Caco-2 (cell line): ENCODE measurements at regions of chr7 and their contacts with region 1.

Region 1: GRCh38 chr7:102390697-102391484 is 5.3 kb upstream of the PRKRIP1 start:
- DNase-seq: peak; percentile 87 to 91
- H3K4me3 ChIP-seq: no peak overlapping the region
- H3K4me3 Mint-ChIP-seq: no peak overlapping the region
- H3K27ac Mint-ChIP-seq: peak overlapping the region; percentile 35
- H3K4me1 ChIP-seq: peaks cover 27% of the 10 kb centered on the region
- H3K4me1 Mint-ChIP-seq: peaks cover 15% of the 10 kb centered on the region
- H3K27me3 ChIP-seq: no peaks in the 10 kb centered on the region
- H3K27me3 Mint-ChIP-seq: no peaks in the 10 kb centered on the region
- CTCF ChIP-seq: peak; percentile 87 to 95

Region 2: GRCh38 chr7:102279537-102280400 is 111.1 kb before region 1 on chr7:
- CTCF ChIA-PET with region 1: interaction called, 9 read pairs
- POLR2A ChIA-PET with region 1: interaction called, 4 read pairs
- intact Hi-C with region 1: loop called (anchors 1 kb)
- DNase-seq: peak; percentile 73 to 79
- H3K4me3 ChIP-seq: no peak overlapping the region
- H3K4me3 Mint-ChIP-seq: no peak overlapping the region
- H3K27ac Mint-ChIP-seq: no peak overlapping the region
- H3K4me1 ChIP-seq: no peaks in the 10 kb centered on the region
- H3K4me1 Mint-ChIP-seq: peaks cover 1% of the 10 kb centered on the region
- H3K27me3 ChIP-seq: no peaks in the 10 kb centered on the region
- H3K27me3 Mint-ChIP-seq: no peaks in the 10 kb centered on the region
- CTCF ChIP-seq: peak; percentile 92 to 96

Region 3: DNA sequence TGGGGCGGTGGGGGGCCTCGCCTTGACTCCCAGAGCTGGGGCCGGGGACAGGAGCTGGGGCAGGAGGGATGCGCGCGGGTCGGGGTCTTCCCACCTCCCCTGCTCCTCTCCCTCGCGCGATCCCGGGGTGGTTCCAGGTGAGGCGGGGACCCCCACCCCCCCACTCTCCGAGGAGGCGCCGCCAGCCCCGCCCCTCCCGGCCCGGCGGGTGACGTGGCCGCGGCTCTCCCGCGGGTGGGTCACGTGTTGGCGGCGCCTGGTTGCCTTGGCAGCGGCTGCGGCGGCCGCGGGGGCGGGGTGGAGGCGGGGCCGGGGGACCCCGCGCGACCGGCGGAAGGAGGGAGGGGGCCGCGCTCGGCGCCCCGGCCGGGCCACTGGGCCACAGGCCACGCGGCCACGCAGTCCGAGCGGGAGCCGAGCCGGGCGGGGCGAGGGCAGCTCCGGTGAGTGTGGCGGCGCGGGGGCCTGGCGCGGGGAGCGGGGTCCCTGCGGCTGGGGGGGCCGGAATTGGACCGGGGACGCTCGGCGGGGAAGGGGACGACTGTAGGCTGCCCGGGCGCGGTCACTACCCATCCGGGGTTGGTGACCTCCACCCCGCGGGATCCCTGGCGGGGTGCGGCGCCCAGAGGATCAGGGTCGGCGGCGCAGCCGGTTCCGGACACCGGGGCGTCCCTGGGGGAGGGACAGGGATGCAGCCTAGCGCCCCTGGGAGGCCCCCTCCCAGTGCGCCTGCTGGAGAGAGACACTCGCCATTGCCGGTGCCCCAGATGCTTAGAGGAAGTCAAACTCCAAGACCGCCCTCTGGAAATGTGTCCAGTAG is 42.5 kb after region 1 on chr7 and contains the start of gene ORAI2:
- CTCF ChIA-PET with region 1: no interaction called
- POLR2A ChIA-PET with region 1: interaction called, 12 read pairs
- intact Hi-C with region 1: no loop called
- DNase-seq: peak; percentile 76 to 87
- H3K4me3 ChIP-seq: peak within 1 kb of the TSS; percentile 93
- H3K4me3 Mint-ChIP-seq: peak within 1 kb of the TSS; percentile 78
- H3K27ac Mint-ChIP-seq: peak within 1 kb of the TSS; percentile 78
- H3K4me1 ChIP-seq: peaks cover 22% of the 10 kb centered on the region
- H3K4me1 Mint-ChIP-seq: peaks cover 16% of the 10 kb centered on the region
- H3K27me3 ChIP-seq: no peaks in the 10 kb centered on the region
- H3K27me3 Mint-ChIP-seq: no peaks in the 10 kb centered on the region
- CTCF ChIP-seq: no peak
- total RNA-seq, gene ORAI2: 19.4 and 20.2 TPM in 2 replicates

Region 4: GRCh38 chr7:102456327-102456726 is 65.4 kb after region 1 on chr7:
- CTCF ChIA-PET with region 1: no interaction called
- POLR2A ChIA-PET with region 1: no interaction called
- intact Hi-C with region 1: no loop called
- DNase-seq: no peak
- H3K4me3 ChIP-seq: no peak overlapping the region
- H3K4me3 Mint-ChIP-seq: no peak overlapping the region
- H3K27ac Mint-ChIP-seq: no peak overlapping the region
- H3K4me1 ChIP-seq: peaks cover 3% of the 10 kb centered on the region; the same call in 1 of the 2 replicates
- H3K4me1 Mint-ChIP-seq: no peaks in the 10 kb centered on the region
- H3K27me3 ChIP-seq: no peaks in the 10 kb centered on the region
- H3K27me3 Mint-ChIP-seq: no peaks in the 10 kb centered on the region
- CTCF ChIP-seq: no peak